ENCODE measurements at regions of chr20 and their contacts with region 1.

Region 1: DNA sequence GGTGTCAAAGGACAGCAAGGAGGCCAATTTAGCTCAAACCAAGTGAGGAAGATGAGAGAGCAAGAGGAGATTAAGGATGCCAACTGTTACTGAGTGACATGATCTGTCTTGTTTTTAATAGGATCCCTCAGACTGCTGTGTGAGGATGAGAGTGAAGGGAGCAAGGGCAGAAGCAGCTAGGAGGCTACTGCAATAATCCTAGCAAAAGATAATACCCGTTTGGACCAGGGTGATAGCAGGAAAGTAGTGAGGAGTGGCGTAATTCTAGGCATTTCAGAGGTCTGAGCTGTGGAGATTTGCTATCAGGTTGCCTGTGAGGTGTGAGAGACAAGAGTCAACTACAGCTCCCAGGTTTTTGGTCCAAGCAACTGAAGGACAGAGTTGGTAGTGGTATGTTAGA is 14.7 kb downstream of the UBE2V1 start:
- DNase-seq: no peak
- ATAC-seq: no peak
- H3K4me3 ChIP-seq: no peak overlapping the region
- H3K4me3 Mint-ChIP-seq: no peak overlapping the region
- H3K27ac ChIP-seq: peak overlapping the region in 1 of 2 donors; percentile 20
- H3K27ac Mint-ChIP-seq: peak overlapping the region; percentile 1
- H3K4me1 ChIP-seq: peaks cover 6 to 14% of the 10 kb centered on the region in 2 donors
- H3K4me1 Mint-ChIP-seq: peaks cover 37% of the 10 kb centered on the region
- H3K27me3 ChIP-seq: no peaks in the 10 kb centered on the region
- H3K27me3 Mint-ChIP-seq: no peaks in the 10 kb centered on the region
- CTCF ChIP-seq: no peak

Region 2: DNA sequence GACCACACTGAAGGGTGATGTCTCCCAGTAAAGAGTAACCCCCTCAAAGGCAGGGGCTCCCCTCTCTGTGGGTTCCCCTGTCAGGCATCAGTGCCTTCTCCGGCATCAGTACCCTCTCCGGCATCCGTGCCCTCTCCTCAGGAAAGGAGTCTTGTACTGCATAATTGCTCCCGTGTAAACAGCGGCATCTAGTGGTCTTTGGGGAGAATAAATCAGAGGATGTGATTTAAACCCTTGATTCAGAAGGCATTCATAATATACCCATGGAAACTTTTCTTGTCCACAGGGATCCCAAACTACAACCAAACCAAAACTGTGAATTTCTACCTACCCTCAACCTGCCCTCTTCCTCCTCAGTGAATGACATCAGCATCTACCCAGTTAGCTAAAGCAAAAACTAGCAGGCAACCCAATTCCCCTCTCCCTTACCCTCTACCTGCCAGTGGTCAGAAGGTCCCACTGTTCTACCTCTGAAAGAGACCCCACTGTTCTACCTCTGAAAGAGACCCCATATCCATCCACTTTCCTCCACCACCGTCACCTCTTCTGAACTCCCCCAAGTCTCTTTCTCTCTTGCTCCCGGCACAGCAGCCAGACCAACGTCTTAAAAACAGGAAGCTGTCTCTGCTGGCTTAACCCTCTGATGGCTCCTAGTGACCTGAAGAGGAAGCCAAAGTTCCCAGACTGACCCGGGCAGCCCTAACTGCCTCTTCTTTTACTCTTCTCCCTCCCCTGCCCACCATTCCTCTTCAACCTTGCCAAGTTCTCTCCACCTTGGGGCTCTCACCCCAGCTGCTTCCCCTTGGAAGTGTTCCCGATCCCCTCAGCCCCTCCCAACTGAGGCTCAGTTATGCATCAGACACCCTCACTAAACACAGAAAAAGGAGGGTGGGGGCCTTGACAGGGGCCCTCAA is 12.6 kb before region 1 on chr20:
- CTCF ChIA-PET with region 1: interaction called, 21 read pairs
- POLR2A ChIA-PET with region 1: no interaction called
- intact Hi-C with region 1: no loop called
- DNase-seq: peak; percentile 71
- ATAC-seq: peak; percentile 86
- H3K4me3 ChIP-seq: peak overlapping the region; percentile 30 to 78 (median 61)
- H3K4me3 Mint-ChIP-seq: peak overlapping the region; percentile 88
- H3K27ac ChIP-seq: peak overlapping the region in 1 of 2 donors; percentile 65
- H3K27ac Mint-ChIP-seq: peak overlapping the region; percentile 64
- H3K4me1 ChIP-seq: peaks cover 12 to 13% of the 10 kb centered on the region in 2 donors
- H3K4me1 Mint-ChIP-seq: peaks cover 13% of the 10 kb centered on the region
- H3K27me3 ChIP-seq: no peaks in the 10 kb centered on the region
- H3K27me3 Mint-ChIP-seq: no peaks in the 10 kb centered on the region
- CTCF ChIP-seq: peak; percentile 87